WTC11 (cell line): ENCODE measurements at regions of chr11 and their contacts with region 1.

Region 1: DNA sequence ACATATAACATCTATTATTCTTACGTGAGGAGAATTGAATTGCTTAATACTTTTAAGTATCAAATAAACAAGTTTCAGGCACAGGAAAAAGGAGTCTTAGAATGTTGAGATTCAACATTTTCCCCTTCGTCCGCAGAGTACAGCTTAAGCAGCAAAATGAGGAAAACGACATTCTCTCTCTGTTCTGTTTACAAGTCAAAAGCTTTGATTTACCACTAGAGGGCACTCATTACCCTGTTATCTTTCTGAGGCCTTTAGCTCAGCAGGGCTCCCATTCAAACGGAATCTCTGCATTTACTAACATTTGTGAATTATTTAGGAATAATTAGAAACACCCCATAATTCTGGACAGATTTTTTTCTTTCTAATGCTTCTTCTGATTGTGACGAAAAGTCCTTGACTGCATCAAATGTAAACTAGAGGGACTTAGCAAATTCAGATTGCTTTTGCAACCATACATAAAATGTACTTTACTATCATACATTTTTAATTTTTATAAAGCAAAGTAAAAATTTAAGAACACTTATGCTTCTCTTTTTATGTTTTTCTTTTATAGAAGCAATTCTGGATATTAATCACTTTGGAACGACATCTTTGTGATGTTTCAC is 75.0 kb downstream of the JRKL start:
- DNase-seq: no peak
- ATAC-seq: peak; percentile 57
- H3K4me3 Mint-ChIP-seq: peak overlapping the region; percentile 63; the same call in 1 of the 2 replicates
- H3K27ac Mint-ChIP-seq: no peak overlapping the region
- H3K4me1 Mint-ChIP-seq: peaks cover 30% of the 10 kb centered on the region
- H3K27me3 Mint-ChIP-seq: peaks cover 2% of the 10 kb centered on the region; the same call in 1 of the 2 replicates
- CTCF ChIP-seq: peak; percentile 57

Region 2: DNA sequence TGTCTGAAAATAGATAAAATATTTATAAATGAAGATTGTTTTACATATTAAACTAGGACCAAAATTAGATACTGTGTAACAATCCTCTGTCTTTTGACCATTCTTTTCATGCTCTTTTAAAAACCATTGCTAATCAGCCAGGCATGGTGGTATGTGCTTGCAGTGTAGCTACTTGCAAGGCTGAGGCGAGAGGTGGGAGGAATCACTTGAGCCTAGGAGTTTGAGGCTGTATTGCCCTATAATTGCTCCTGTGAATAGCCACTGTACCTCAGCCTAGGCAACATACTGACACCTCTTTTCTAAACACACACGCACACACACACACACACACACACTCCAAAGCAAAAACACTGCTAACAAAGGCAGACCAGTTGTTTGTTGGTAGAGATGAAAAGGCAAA is 184.2 kb after region 1 on chr11:
- CTCF ChIA-PET with region 1: interaction called, 12 read pairs
- POLR2A ChIA-PET with region 1: no interaction called
- DNase-seq: no peak
- ATAC-seq: peak; percentile 67
- H3K4me3 Mint-ChIP-seq: no peak overlapping the region
- H3K27ac Mint-ChIP-seq: no peak overlapping the region
- H3K4me1 Mint-ChIP-seq: peaks cover 19% of the 10 kb centered on the region
- H3K27me3 Mint-ChIP-seq: no peaks in the 10 kb centered on the region
- CTCF ChIP-seq: no peak

Region 3: GRCh38 chr11:96794152-96794551 is 329.3 kb after region 1 on chr11:
- CTCF ChIA-PET with region 1: interaction called, 17 read pairs
- POLR2A ChIA-PET with region 1: no interaction called
- DNase-seq: no peak
- ATAC-seq: peak; percentile 97
- H3K4me3 Mint-ChIP-seq: no peak overlapping the region
- H3K27ac Mint-ChIP-seq: no peak overlapping the region
- H3K4me1 Mint-ChIP-seq: no peaks in the 10 kb centered on the region
- H3K27me3 Mint-ChIP-seq: no peaks in the 10 kb centered on the region; the same call in 1 of the 2 replicates
- CTCF ChIP-seq: no peak

Region 4: GRCh38 chr11:96893988-96894387 is 429.2 kb after region 1 on chr11:
- CTCF ChIA-PET with region 1: interaction called, 10 read pairs
- POLR2A ChIA-PET with region 1: no interaction called
- DNase-seq: no peak
- ATAC-seq: peak; percentile 48
- H3K4me3 Mint-ChIP-seq: no peak overlapping the region
- H3K27ac Mint-ChIP-seq: peak overlapping the region; percentile 33
- H3K4me1 Mint-ChIP-seq: peaks cover 9% of the 10 kb centered on the region
- H3K27me3 Mint-ChIP-seq: no peaks in the 10 kb centered on the region
- CTCF ChIP-seq: no peak